IMR-90 (cell line): ENCODE measurements at regions of chr7 and their contacts with region 1.

Region 1: GRCh38 chr7:93055543-93056107 is 62.2 kb downstream of the SAMD9 start:
- DNase-seq: peak; percentile 62
- ATAC-seq: peak; percentile 89
- H3K4me3 ChIP-seq: no peak overlapping the region
- H3K27ac ChIP-seq: no peak overlapping the region
- H3K4me1 ChIP-seq: no peaks in the 10 kb centered on the region
- H3K27me3 ChIP-seq: no peaks in the 10 kb centered on the region; the same call in 1 of the 2 replicates
- CTCF ChIP-seq: peak; percentile 82
- POLR2A ChIP-seq: no peak
- RAD21 ChIP-seq: peak; percentile 86

Region 2: DNA sequence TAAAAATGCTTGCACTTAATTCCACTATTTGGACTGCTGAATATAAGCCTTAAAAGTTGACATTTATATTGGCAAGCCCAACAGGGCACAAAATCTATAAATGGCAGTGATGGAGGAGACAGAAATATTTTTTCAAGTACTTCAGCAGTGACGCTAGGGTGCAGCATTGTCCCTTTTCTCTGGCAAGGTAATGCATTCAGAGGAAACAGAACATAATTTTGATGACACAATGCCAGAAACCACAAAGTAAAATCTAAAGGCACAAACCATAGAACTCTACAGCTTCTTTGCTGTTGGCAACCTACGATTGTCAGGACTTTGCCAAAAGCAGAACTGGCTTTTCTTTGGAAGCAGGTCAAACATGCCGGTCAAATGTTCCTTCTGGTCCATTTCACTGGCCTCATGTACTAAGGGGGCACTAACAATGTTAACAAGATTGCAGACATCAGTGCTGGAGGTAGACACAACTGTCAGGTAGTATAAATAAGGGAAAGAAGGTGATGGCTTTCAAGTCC is 434.5 kb before region 1 on chr7:
- CTCF ChIA-PET with region 1: no interaction called
- POLR2A ChIA-PET with region 1: no interaction called
- dilution Hi-C with region 1: no loop called
- in situ Hi-C with region 1: loop called (anchors 5 kb)
- intact Hi-C with region 1: loop called (anchors 1 kb)
- DNase-seq: peak; percentile 94
- ATAC-seq: peak; percentile 84
- H3K4me3 ChIP-seq: no peak overlapping the region
- H3K27ac ChIP-seq: peak overlapping the region; percentile 45; the same call in 1 of the 2 replicates
- H3K4me1 ChIP-seq: peaks cover 6% of the 10 kb centered on the region
- H3K27me3 ChIP-seq: no peaks in the 10 kb centered on the region
- CTCF ChIP-seq: peak; percentile 84
- POLR2A ChIP-seq: no peak
- RAD21 ChIP-seq: peak; percentile 89

Region 3: DNA sequence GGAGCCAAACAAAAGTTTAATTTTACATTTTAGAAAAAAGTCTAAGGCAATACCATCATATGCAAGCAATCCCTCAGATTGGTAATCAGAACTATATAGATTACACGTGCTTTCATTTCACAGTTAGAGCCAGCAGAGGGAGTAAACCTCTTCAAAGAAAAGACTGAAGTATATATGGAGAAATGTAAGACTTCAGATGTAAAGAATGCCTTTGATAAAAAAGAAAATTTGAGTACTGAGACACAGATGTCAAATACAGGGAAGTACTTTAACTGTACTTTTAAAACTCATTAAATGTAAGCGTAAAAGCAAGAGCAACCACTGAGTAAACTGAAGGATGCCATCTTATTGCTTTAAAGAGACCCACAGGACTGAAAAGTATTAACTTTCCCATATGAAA is 364.0 kb before region 1 on chr7:
- CTCF ChIA-PET with region 1: no interaction called
- POLR2A ChIA-PET with region 1: no interaction called
- dilution Hi-C with region 1: no loop called
- in situ Hi-C with region 1: no loop called
- intact Hi-C with region 1: loop called (anchors 1 kb)
- DNase-seq: peak; percentile 76
- ATAC-seq: peak; percentile 30; the same call in 1 of the 2 replicates
- H3K4me3 ChIP-seq: no peak overlapping the region
- H3K27ac ChIP-seq: peak overlapping the region; percentile 36
- H3K4me1 ChIP-seq: peaks cover 2% of the 10 kb centered on the region; the same call in 1 of the 2 replicates
- H3K27me3 ChIP-seq: no peaks in the 10 kb centered on the region
- CTCF ChIP-seq: peak; percentile 61
- POLR2A ChIP-seq: no peak
- RAD21 ChIP-seq: peak; percentile 65

Region 4: DNA sequence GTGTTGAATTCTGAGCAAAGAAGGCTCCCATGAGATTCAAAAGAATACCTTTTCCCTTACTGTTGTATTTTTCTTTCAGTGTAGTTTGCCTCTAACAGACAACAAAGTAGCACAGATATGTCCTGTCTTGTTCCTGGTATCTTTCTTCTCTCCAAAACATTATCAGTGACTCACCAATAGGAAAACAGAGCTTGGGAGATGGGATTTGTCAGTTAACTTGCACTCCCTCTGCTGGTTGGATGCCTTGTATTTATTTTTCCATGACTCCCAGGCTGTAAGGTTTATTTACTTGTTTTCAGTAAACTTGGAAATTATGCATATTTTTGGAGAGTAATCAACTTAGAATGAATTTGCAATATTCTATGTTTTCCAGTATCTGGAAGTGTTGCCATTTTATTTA is 67.6 kb before region 1 on chr7:
- CTCF ChIA-PET with region 1: no interaction called
- POLR2A ChIA-PET with region 1: no interaction called
- dilution Hi-C with region 1: no loop called
- in situ Hi-C with region 1: no loop called
- intact Hi-C with region 1: loop called (anchors 2 kb)
- DNase-seq: peak; percentile 78
- ATAC-seq: peak; percentile 64
- H3K4me3 ChIP-seq: no peak overlapping the region
- H3K27ac ChIP-seq: no peak overlapping the region
- H3K4me1 ChIP-seq: peaks cover 7% of the 10 kb centered on the region
- H3K27me3 ChIP-seq: no peaks in the 10 kb centered on the region
- CTCF ChIP-seq: peak; percentile 52
- POLR2A ChIP-seq: no peak
- RAD21 ChIP-seq: peak; percentile 58